Naive thymus-derived CD8-positive, alpha-beta T cell (primary cell): ENCODE measurements at regions of chr13 and their contacts with region 1.

Region 1: DNA sequence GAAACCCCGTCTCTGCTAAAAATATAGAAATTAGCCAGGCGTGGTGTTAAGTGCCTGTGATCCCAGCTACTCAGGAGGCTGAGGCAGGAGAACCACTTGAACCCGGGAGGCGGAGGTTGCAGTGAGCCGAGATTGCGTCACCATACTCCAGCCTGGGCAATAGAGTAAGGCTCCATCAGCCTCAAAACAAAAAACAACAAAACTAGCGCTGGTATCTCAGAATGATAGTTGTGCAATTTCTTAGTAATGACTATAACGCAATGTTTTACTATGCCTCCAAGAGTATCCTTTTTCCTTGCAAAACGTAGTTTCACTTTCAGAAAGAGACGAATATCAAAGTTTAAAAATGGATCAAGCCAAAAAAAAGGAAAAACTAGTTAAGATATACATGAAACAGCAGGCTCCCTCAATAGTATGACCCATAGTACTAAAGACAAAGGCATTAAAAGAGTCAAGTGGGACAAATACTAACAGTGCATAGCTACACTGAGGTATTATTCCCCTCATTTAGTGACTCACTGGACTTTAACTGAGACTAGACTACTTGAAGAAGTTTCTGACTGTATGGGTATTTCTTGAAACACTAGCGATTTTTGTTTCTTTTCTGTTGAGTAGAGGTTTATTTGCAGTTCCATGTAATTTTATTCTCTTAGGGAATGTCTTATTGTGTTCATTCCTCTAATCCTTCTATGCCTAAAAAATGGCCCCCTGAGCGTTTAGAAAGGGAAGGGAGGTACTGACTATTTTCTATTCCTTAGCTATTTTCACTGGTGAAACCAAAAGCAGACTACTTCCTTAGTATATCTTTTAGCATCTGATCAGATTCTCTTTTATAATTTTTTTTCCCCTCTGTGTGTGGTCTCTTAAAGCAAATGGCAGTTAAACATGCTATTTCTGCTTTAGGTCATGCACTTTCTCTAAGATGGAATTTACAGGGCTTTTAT is 10.4 kb upstream of the ITM2B start:
- DNase-seq: peak in 2 of 10 donors; percentile 35 to 44
- ATAC-seq: peak; percentile 29 to 43
- H3K4me3 Mint-ChIP-seq: peak overlapping the region; percentile 31 to 89 (median 82)
- H3K27ac Mint-ChIP-seq: peak overlapping the region; percentile 94 to 99 (median 97)
- H3K4me1 Mint-ChIP-seq: peaks cover 31 to 79% (median 68%) of the 10 kb centered on the region in 4 donors
- H3K27me3 Mint-ChIP-seq: no peaks in the 10 kb centered on the region

Region 2: GRCh38 chr13:48126944-48127830 is 95.4 kb before region 1 on chr13:
- POLR2A ChIA-PET with region 1: interaction called, 14 read pairs
- DNase-seq: peak in 9 of 10 donors; percentile 10 to 82 (median 47)
- ATAC-seq: peak; percentile 85 to 91
- H3K4me3 Mint-ChIP-seq: peak overlapping the region; percentile 34 to 78 (median 62)
- H3K27ac Mint-ChIP-seq: peak overlapping the region; percentile 88 to 97 (median 94)
- H3K4me1 Mint-ChIP-seq: peaks cover 14 to 31% (median 25%) of the 10 kb centered on the region in 4 donors
- H3K27me3 Mint-ChIP-seq: no peaks in the 10 kb centered on the region

Region 3: GRCh38 chr13:48155848-48156247 is 66.8 kb before region 1 on chr13:
- POLR2A ChIA-PET with region 1: interaction called, 85 read pairs
- DNase-seq: peak in 9 of 10 donors; percentile 17 to 79 (median 56)
- ATAC-seq: peak; percentile 75 to 87
- H3K4me3 Mint-ChIP-seq: peak overlapping the region; percentile 57 to 89 (median 78)
- H3K27ac Mint-ChIP-seq: peak overlapping the region; percentile 93 to 99 (median 97)
- H3K4me1 Mint-ChIP-seq: peaks cover 46 to 95% (median 86%) of the 10 kb centered on the region in 4 donors
- H3K27me3 Mint-ChIP-seq: no peaks in the 10 kb centered on the region

Region 4: GRCh38 chr13:48184260-48184659 is 38.4 kb before region 1 on chr13:
- POLR2A ChIA-PET with region 1: interaction called, 42 read pairs
- DNase-seq: no peak
- ATAC-seq: no peak
- H3K4me3 Mint-ChIP-seq: peak overlapping the region; percentile 6 to 76 (median 62)
- H3K27ac Mint-ChIP-seq: peak overlapping the region; percentile 78 to 99 (median 94)
- H3K4me1 Mint-ChIP-seq: peaks cover 31 to 74% (median 64%) of the 10 kb centered on the region in 4 donors
- H3K27me3 Mint-ChIP-seq: no peaks in the 10 kb centered on the region

Region 5: GRCh38 chr13:48199499-48199898 is 23.1 kb before region 1 on chr13:
- POLR2A ChIA-PET with region 1: interaction called, 12 read pairs
- DNase-seq: no peak
- ATAC-seq: peak; percentile 47 to 62
- H3K4me3 Mint-ChIP-seq: peak overlapping the region in 4 of 10 donors; percentile 3 to 43 (median 27)
- H3K27ac Mint-ChIP-seq: peak overlapping the region; percentile 13 to 84 (median 73)
- H3K4me1 Mint-ChIP-seq: peaks cover 20 to 35% (median 27%) of the 10 kb centered on the region in 4 donors
- H3K27me3 Mint-ChIP-seq: no peaks in the 10 kb centered on the region